H1 (cell line): ENCODE measurements at regions of chr17 and their contacts with region 1.

Region 1: GRCh38 chr17:75345514-75346167 is 56.4 kb upstream of the SLC25A19 start:
- DNase-seq: no peak
- H3K4me3 ChIP-seq: peak overlapping the region; percentile 21 to 53 (median 30); a peak in 6 of 8 replicates
- H3K27ac ChIP-seq: 0 out of 2 replicates have a peak overlapping the region, but pooled peaks have one; percentile 41
- H3K4me1 ChIP-seq: peaks cover 18 to 36% (median 31%) of the 10 kb centered on the region in 4 experiments
- H3K27me3 ChIP-seq: no peaks in the 10 kb centered on the region
- CTCF ChIP-seq: no peak
- EP300 ChIP-seq: no peak
- POLR2A ChIP-seq: no peak
- RAD21 ChIP-seq: no peak

Region 2: GRCh38 chr17:75250009-75250471 is 95.6 kb before region 1 on chr17:
- CTCF ChIA-PET with region 1: no interaction called
- POLR2A ChIA-PET with region 1: no interaction called
- DNase-seq: no peak
- H3K4me3 ChIP-seq: no peak overlapping the region
- H3K27ac ChIP-seq: no peak overlapping the region
- H3K4me1 ChIP-seq: peaks cover 0 to 7% (median under 1%) of the 10 kb centered on the region in 4 experiments; a peak in 3 of 7 replicates
- H3K27me3 ChIP-seq: no peaks in the 10 kb centered on the region
- CTCF ChIP-seq: no peak
- EP300 ChIP-seq: no peak
- POLR2A ChIP-seq: no peak
- RAD21 ChIP-seq: no peak

Region 3: GRCh38 chr17:75325827-75326225 is 19.8 kb before region 1 on chr17:
- CTCF ChIA-PET with region 1: interaction called, 40 read pairs
- POLR2A ChIA-PET with region 1: interaction called, 15 read pairs
- DNase-seq: no peak
- H3K4me3 ChIP-seq: no peak overlapping the region
- H3K27ac ChIP-seq: no peak overlapping the region
- H3K4me1 ChIP-seq: peaks cover 4 to 9% (median 7%) of the 10 kb centered on the region in 4 experiments; a peak in 5 of 7 replicates
- H3K27me3 ChIP-seq: no peaks in the 10 kb centered on the region
- CTCF ChIP-seq: no peak
- EP300 ChIP-seq: no peak
- POLR2A ChIP-seq: no peak
- RAD21 ChIP-seq: no peak